ENCODE measurements at regions of chr7 and their contacts with region 1.

Region 1: DNA sequence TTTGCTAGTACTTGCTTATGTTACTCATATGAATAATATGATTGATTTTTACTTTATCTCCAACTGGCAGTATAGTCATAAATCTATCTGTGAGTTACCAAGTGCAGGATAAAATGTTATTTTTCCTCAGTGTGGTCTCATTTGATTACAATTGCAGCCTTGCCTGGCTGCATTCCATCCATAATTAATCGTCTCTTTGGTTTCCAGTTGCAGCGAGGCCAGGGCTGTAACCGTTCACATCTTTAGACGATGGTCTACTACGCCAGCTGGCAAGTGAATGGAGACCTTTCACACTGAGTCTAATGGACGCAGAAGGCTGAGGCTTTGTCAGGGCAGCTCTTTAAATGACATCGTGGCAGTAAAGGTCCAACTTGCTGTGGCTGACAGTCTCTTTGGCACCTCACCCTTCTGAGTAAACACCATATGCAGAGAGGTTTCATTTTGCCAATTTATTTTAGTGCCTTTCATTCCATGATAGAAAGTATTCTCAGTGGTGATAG is 84.0 kb downstream of the ARL4A start:
- DNase-seq: no peak

Region 2: GRCh38 chr7:12729112-12729511 is 42.3 kb before region 1 on chr7:
- intact Hi-C with region 1: loop called (anchors 5 kb)
- DNase-seq: peak; percentile 82

Measured in cardiac septum (tissue), 1 donor.